ENCODE measurements at regions of chr5 and their contacts with region 1.

Region 1: DNA sequence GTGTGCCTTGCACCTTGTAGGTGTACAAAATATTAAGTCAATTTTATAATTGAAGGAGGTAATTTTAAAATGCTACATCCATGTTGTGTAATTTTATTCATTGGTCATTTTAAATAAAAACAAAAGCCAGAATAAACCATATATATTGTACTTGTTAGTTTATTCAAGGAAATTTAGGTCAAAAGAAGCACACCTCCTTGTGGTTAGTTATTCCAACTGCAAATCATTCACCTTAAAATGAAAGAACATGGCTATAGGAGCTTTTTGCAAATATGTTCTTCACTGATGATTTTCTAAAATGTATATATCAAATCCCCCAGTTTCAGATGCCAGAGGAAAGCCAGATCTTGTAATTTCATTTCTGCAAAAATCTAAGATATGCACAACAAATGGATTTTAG is 5.4 kb upstream of the MOCS2 start:
- DNase-seq: peak; percentile 45
- ATAC-seq: peak; percentile 39; the same call in 1 of the 2 replicates
- H3K4me3 ChIP-seq: no peak overlapping the region
- H3K27ac ChIP-seq: no peak overlapping the region
- H3K4me1 ChIP-seq: peaks cover 9% of the 10 kb centered on the region
- H3K27me3 ChIP-seq: no peaks in the 10 kb centered on the region
- CTCF ChIP-seq: peak; percentile 55

Region 2: DNA sequence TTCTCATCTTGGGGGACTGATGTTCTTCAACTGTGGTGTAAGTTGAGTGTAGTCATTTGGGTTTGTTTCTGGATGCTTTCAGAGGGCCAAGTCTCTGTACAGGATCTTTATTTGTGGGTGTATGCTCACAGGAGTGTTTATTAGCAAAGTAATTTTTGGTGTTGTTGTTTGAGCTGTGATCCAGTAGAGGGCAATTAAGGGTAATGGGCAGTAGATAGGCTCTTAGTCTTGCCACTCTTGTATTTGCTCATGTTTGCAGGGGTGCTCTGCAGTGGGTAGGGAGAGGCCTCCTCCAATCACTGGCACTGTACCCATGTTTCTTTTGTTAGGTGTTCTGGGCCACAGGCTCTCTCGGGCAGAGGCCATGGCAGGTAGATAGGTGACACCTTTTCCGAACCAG is 171.7 kb before region 1 on chr5:
- CTCF ChIA-PET with region 1: interaction called, 10 read pairs
- POLR2A ChIA-PET with region 1: no interaction called
- intact Hi-C with region 1: no loop called
- DNase-seq: peak; percentile 36
- ATAC-seq: peak; percentile 65
- H3K4me3 ChIP-seq: no peak overlapping the region
- H3K27ac ChIP-seq: no peak overlapping the region
- H3K4me1 ChIP-seq: peaks cover 22% of the 10 kb centered on the region
- H3K27me3 ChIP-seq: no peaks in the 10 kb centered on the region
- CTCF ChIP-seq: peak; percentile 57